ENCODE measurements at regions of chr9 and their contacts with region 1.

Region 1: DNA sequence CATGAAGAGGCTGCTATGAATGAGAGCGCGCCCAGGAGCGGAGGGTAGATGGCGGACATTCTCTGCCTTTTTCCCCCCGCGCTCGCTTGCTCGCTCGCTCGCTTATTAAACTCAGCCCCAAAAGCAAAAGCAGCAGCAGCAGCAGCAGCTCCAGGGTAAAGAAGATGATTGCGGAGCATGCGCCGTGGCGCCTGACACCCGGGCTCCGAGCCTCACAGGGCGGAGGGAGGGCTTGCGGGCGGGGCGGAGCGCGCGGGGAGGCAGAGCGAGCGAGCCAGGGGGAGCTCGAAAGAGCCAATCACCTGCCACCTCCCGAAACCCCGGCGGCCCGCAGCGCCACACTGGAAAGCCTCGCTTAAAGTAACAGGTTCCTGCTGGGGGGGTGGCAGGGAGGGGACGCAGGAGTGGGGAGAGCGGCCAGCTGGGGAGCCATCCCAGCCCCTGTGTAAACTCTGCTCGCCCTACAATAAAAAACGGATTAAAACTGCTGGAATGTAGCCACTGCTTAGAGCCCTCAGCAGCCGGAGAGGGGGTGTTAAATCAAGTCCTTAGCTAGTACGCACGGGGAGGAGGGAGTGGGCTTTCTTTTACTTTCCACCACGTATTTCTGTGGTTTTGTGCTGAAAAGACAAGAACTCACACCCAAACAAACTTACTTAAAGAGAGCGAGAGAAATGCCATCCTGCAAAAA is at the start of gene MLLT3:
- DNase-seq: peak; percentile 98
- H3K4me3 Mint-ChIP-seq: peak within 1 kb of the TSS; percentile 96
- H3K27ac Mint-ChIP-seq: peak within 1 kb of the TSS; percentile 94
- H3K4me1 Mint-ChIP-seq: peaks cover 41% of the 10 kb centered on the region
- H3K27me3 Mint-ChIP-seq: no peaks in the 10 kb centered on the region
- total RNA-seq, gene MLLT3: 30.8 to 34.0 TPM

Region 2: GRCh38 chr9:19925817-19926503 is 696.5 kb before region 1 on chr9:
- CTCF ChIA-PET with region 1: interaction called, 3 read pairs
- POLR2A ChIA-PET with region 1: interaction called, 4 read pairs
- intact Hi-C with region 1: loop called (anchors 1 kb)
- DNase-seq: peak; percentile 86
- H3K4me3 Mint-ChIP-seq: peak overlapping the region; percentile 50
- H3K27ac Mint-ChIP-seq: no peak overlapping the region
- H3K4me1 Mint-ChIP-seq: peaks cover 15% of the 10 kb centered on the region
- H3K27me3 Mint-ChIP-seq: peaks cover 12% of the 10 kb centered on the region

Region 3: DNA sequence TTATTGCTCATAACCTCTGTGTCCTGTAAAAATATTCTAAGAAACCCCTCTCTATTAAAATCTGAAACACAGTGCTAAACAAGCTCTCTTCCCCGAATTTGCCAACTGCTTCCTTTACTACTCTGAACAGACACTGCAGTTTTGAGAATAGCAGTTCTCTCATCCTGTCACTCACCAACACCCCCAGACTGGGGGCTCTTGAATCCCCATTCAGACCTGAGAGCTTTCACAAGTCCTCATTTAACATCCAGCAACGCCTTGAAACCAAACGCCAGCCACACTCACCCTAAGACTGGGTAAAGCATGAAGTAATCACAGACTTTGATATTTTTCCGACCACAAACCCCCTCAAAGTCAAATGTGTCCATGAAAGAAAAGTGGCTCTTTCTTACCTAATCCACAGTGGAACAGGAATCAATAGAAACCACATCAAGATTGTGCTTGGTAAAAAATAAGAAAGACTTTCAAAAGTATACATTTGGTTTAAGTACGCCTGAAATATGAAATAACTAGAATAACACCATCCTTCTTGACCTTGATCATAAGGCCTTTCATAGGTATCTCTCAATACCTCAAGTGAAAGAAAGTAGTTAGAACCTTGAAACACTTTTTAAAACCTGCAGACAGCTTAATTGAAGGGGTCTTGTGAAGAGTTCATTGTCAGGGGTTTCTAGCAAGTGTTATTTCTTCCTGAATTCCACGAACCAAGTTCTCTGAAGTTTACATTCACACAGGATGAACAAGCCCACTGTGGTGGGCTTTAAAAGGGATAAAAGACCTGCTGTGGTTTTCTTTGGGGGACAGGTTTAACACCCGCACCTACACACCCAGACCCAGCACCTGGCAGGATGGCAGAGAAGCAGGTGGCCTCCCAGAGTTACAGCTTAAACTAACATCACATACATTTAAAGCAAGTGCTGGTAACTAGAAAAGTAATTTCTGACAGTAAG is 412.8 kb before region 1 on chr9:
- CTCF ChIA-PET with region 1: interaction called, 3 read pairs
- POLR2A ChIA-PET with region 1: interaction called, 3 read pairs
- intact Hi-C with region 1: loop called (anchors 2 kb)
- DNase-seq: peak; percentile 79
- H3K4me3 Mint-ChIP-seq: no peak overlapping the region
- H3K27ac Mint-ChIP-seq: peak overlapping the region; percentile 89
- H3K4me1 Mint-ChIP-seq: peaks cover 33% of the 10 kb centered on the region
- H3K27me3 Mint-ChIP-seq: no peaks in the 10 kb centered on the region

Region 4: GRCh38 chr9:20397348-20397747 is 225.1 kb before region 1 on chr9:
- CTCF ChIA-PET with region 1: no interaction called
- POLR2A ChIA-PET with region 1: no interaction called
- intact Hi-C with region 1: loop called (anchors 5 kb)
- DNase-seq: no peak
- H3K4me3 Mint-ChIP-seq: no peak overlapping the region
- H3K27ac Mint-ChIP-seq: no peak overlapping the region
- H3K4me1 Mint-ChIP-seq: peaks cover 40% of the 10 kb centered on the region
- H3K27me3 Mint-ChIP-seq: no peaks in the 10 kb centered on the region

Region 5: DNA sequence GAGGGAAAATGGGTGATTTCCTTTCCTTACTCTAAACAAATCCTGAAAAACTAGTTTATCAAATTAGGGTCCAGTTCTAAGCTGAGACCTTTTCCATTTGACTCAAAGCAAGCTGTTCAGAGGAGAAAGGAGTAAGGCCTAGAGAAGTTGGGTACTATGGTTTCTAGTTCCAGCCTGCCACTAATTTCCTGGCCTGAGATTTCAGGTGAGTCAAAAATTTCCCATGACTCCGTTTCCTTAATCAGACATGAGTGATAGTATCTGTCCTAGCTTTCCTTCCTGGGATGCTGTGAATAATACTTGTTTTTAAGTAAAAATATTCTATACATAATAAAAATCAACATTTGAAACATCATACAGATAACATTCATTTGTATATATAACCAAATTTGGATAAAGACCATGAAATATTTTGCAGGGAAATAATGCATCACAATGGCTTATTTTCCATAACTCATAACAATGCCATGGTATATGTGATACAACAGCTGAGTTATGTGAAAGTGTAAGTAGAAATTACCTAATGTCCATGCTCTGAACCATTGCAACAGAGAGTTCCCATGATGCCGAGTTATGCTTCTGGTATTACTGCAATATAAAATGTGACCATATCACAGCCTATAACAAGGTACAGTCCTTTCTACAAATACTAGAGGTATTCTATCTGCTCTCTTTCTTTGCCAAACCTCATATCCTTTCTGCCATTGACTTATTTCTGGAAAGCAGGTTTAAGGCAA is 142.9 kb before region 1 on chr9:
- CTCF ChIA-PET with region 1: no interaction called
- POLR2A ChIA-PET with region 1: no interaction called
- intact Hi-C with region 1: no loop called
- DNase-seq: no peak
- H3K4me3 Mint-ChIP-seq: no peak overlapping the region
- H3K27ac Mint-ChIP-seq: no peak overlapping the region
- H3K4me1 Mint-ChIP-seq: peaks cover 31% of the 10 kb centered on the region
- H3K27me3 Mint-ChIP-seq: no peaks in the 10 kb centered on the region

Region 6: DNA sequence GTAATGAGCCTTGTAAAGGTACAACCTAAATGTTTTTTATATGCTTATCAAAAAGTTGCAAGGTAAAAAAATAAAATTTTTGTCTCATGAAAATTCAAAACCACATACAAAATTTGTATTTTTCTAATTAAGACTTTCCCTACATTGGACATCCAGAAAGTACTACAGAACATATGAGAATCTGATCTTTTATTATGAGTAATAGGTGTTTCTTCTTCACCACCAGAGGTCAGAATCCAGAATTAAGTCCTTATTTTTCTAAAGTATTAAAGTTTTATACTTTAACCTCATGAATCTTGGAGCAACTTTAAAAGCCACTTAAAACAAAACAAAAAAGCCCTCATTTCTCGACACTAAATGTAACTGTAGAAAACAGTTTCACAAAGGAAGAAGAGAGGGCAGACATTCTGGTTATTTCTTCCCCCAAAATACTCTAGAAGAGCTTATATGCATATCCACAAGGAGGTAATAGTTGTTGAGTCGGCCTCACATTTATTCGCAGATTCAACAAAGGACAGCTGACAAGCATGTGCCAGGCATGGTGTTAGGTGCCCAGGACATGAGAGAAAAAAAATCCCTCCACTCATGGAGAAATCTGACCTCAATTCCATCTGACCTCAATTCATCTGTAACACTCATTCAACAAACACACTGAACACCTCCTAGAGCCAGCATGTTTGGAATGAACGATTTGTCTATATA is 69.5 kb before region 1 on chr9:
- CTCF ChIA-PET with region 1: interaction called, 8 read pairs
- POLR2A ChIA-PET with region 1: interaction called, 12 read pairs
- intact Hi-C with region 1: no loop called
- DNase-seq: no peak
- H3K4me3 Mint-ChIP-seq: peak overlapping the region; percentile 5
- H3K27ac Mint-ChIP-seq: peak overlapping the region; percentile 15
- H3K4me1 Mint-ChIP-seq: peaks cover 66% of the 10 kb centered on the region
- H3K27me3 Mint-ChIP-seq: no peaks in the 10 kb centered on the region

Region 7: DNA sequence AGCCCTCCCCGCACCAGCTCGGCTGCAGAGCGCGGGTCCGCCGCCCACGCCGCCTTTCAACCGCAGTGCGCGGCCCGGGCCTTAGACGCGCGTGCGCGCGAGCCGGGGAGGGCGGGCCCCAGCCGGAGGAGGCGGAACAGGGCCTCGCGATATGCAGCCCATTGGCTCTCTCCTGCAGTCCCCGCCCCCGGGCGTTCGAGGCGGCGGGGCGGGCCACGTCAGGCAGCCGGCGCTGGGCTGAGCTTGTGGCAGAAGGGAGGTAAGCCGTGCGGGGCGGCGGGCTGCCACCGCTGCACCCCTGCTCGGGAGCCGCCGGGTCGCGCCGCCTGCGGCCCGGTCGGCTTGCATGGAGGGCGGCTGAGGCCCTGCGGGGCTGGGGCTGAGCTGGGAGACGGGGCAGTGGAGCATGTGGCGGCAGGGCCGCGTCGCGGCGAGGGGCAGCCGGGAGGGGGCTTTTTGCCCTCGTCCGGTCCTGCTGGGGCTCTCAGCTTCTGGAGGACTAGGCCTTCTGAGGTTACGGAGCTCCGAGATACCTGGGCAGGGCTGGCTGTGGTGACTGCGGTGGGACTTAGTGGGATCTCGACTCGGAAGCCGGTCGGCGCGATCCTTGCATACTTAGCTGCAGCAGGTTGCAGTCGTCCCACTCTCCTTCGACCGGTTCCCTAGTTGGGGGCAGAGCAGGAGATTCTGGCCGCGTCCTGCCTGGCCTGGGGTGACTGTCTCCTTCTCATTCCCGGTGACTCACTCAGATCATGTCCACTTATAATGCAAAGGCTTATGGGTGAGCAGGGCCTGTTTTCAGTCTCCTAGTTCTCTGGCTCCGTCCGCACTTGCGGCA is 61.8 kb after region 1 on chr9 and contains the start of gene FOCAD:
- CTCF ChIA-PET with region 1: interaction called, 25 read pairs
- POLR2A ChIA-PET with region 1: interaction called, 37 read pairs
- intact Hi-C with region 1: loop called (anchors 1 kb)
- DNase-seq: peak; percentile 97
- H3K4me3 Mint-ChIP-seq: peak within 1 kb of the TSS; percentile 83
- H3K27ac Mint-ChIP-seq: peak within 1 kb of the TSS; percentile 85
- H3K4me1 Mint-ChIP-seq: peaks cover 22% of the 10 kb centered on the region
- H3K27me3 Mint-ChIP-seq: no peaks in the 10 kb centered on the region
- total RNA-seq, gene FOCAD: 35.4 to 37.1 TPM

Region 8: DNA sequence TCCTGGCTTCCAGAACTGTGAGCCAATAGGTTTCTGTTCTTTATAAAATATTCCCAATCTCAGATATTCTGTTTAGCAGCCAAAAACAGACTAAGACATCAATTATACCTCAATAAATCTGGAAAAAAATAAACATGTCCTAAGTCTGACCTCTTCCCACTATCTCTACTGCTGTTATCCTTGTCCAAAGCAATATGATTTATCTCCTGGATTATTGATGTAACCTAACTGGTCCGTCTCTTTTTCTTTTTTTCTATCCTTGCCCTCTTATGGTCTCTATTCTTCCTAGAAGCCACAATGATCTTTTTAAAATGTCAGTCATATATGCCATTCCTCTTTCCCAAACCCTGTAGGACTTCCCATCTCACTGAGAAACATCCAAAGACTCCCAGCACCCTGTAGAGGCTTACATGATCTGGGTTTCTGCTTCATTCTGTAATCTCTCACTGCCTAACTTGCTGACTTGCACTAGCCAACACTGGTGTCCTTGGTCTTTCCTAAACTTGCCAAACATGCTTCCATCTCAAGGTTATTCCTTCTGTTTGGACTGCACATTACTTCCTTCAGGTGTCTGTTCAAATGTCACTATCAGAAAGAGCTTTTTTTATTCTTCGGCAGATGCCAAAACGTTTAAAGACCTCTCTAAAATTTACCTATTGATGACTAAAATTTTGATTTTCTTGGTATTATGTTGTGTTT is 74.7 kb after region 1 on chr9:
- CTCF ChIA-PET with region 1: no interaction called
- POLR2A ChIA-PET with region 1: no interaction called
- intact Hi-C with region 1: no loop called
- DNase-seq: no peak
- H3K4me3 Mint-ChIP-seq: no peak overlapping the region
- H3K27ac Mint-ChIP-seq: no peak overlapping the region
- H3K4me1 Mint-ChIP-seq: peaks cover 7% of the 10 kb centered on the region
- H3K27me3 Mint-ChIP-seq: no peaks in the 10 kb centered on the region

Region 9: DNA sequence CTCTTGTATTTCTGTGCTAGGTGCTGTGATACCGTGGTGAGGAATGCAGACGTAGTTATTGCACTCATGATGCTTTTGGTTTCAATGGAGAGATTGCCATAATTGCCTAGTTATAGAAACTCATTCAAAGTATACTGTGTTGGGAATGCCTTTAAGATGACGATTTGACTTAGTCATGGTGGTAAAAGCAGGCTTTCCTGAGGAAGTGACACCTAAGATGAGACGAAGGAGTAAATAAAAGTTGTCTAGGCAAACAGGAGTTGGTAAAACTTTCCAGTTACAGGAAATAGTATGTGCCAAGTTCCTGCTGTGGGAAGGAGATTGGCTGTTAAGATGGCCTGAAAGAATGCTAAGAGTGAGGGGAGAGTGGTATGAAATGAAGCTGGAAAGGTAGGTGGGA is 109.6 kb after region 1 on chr9:
- CTCF ChIA-PET with region 1: no interaction called
- POLR2A ChIA-PET with region 1: no interaction called
- intact Hi-C with region 1: no loop called
- DNase-seq: no peak
- H3K4me3 Mint-ChIP-seq: no peak overlapping the region
- H3K27ac Mint-ChIP-seq: no peak overlapping the region
- H3K4me1 Mint-ChIP-seq: no peaks in the 10 kb centered on the region
- H3K27me3 Mint-ChIP-seq: no peaks in the 10 kb centered on the region

Region 10: DNA sequence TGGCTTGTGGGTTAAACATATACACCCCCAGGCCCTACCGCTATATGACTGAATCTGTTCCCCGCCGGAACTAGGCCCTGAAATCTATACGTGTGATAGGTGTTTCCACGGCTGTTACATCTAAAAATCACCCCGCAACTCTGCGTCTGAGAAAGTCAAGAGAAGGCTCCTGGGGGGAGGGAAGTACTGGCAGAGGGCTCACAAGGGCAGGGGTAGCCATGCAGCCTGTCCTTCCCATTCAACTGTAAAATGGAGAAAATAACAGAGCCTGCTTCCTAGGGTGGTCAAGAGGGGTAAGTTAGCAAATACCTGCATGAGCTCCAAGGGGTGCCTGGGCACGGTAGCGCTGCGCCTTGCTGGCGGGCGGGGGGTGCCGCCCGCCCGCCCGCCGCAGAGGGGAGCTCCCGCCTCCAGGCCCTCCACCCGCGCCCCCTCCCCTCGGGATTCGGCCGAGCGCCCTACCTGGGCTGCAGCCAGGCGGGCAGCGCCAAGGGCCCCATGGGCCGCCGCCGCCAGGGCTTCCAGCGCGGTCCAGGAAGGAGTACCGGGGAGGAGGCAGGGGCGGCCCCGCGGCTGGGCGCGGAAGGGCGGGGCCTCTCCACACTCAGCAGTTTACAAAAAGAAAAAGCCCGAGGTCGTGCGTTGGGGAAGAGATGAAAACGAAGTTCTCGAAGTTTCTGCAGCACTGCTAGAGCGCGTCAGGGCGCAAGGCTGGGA is 408.8 kb after region 1 on chr9 and contains the start of gene HACD4:
- CTCF ChIA-PET with region 1: interaction called, 3 read pairs
- POLR2A ChIA-PET with region 1: interaction called, 5 read pairs
- intact Hi-C with region 1: loop called (anchors 1 kb)
- DNase-seq: peak; percentile 77
- H3K4me3 Mint-ChIP-seq: peak within 1 kb of the TSS; percentile 60
- H3K27ac Mint-ChIP-seq: peak within 1 kb of the TSS; percentile 66
- H3K4me1 Mint-ChIP-seq: peaks cover 21% of the 10 kb centered on the region
- H3K27me3 Mint-ChIP-seq: no peaks in the 10 kb centered on the region
- total RNA-seq, gene HACD4: 1.9 to 2.4 TPM

Measured in activated CD4-positive, alpha-beta memory T cell treated with anti-CD3 and anti-CD28 coated beads for 36 hours (primary cell).